Heart left ventricle (tissue), 16 donors: ENCODE measurements at regions of chr1 and their contacts with region 1.

Region 1: GRCh38 chr1:186985889-186986491 is 157.2 kb downstream of the PLA2G4A start:
- DNase-seq: no peak
- ATAC-seq: peak in 3 of 4 donors; percentile 62 to 73 (median 64)
- H3K4me3 ChIP-seq: no peak overlapping the region
- H3K27ac ChIP-seq: peak overlapping the region in 1 of 12 donors; percentile 79
- H3K4me1 ChIP-seq: peaks cover 0 to 3% (median 0%) of the 10 kb centered on the region in 12 donors
- H3K27me3 ChIP-seq: no peaks in the 10 kb centered on the region
- CTCF ChIP-seq: peak; percentile 49 to 79 (median 66)
- POLR2A ChIP-seq: no peak

Region 2: DNA sequence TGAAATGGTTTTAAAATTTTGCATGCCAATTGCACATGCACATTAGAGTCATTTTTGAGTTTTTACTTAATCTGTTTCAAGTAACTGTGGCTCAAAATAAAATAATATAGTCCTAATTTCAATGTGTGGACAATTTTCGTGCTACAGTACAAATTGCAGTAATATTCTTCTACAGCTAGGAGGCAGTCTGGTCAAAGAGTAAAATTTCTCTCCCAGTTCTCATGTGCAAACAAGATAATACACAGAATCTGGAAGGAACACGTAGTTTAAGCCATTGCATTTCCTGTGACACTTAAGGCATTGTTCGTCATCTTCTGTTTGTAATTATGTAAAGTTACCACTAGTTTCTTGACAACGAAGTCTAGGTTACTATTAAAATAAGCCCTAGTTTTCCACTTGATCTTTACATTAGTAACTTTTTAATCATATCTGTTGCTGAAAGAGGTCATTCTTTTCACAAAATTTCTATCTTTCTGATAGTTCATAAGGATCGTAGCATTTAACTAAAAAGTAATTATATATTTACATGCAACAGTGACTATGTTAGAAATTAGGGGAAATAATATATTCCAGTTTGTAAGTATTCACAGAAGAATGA is 581.4 kb before region 1 on chr1:
- intact Hi-C with region 1: loop called in 7 of 10 experiments (anchors 2 to 10 kb)
- DNase-seq: no peak
- ATAC-seq: peak in 1 of 4 donors; percentile 31
- H3K4me3 ChIP-seq: no peak overlapping the region
- H3K27ac ChIP-seq: no peak overlapping the region
- H3K4me1 ChIP-seq: peaks cover 0 to 7% (median 0%) of the 10 kb centered on the region in 12 donors
- H3K27me3 ChIP-seq: no peaks in the 10 kb centered on the region
- CTCF ChIP-seq: peak; percentile 45 to 76 (median 63)
- POLR2A ChIP-seq: no peak

Region 3: DNA sequence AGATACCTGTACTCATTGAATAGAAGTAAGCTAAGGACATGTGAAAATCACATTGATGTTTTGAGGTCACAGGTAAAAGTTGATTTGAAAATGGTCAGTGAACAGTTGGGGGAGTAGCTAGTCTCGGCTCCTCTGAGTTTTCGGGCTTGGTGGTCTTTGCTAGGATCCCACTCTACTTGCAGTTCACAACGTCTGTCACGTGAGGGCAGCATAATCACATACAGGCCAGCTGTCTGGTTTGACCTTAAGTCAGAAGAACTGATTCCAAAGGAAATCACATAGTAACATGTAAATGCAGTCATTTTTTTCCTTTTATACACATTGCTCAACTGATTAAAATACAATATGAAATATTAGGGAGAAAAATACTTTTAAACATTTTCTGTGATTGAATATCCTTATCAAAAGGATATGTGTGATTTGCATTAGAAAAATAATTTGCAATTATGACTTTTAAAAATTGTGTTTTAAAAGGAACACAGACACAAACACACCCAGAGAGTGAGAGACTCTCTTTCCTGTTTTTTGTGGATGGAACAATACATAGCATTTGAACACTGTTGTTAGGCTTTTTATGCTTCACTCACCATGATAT is 503.2 kb before region 1 on chr1:
- intact Hi-C with region 1: loop called (anchors 1 to 5 kb)
- DNase-seq: peak in 4 of 5 donors; percentile 16 to 37 (median 34)
- ATAC-seq: peak in 3 of 4 donors; percentile 50 to 66 (median 64)
- H3K4me3 ChIP-seq: no peak overlapping the region
- H3K27ac ChIP-seq: no peak overlapping the region
- H3K4me1 ChIP-seq: peaks cover 0 to 3% (median 0%) of the 10 kb centered on the region in 12 donors
- H3K27me3 ChIP-seq: no peaks in the 10 kb centered on the region
- CTCF ChIP-seq: peak; percentile 62 to 90 (median 81)
- POLR2A ChIP-seq: no peak

Region 4: DNA sequence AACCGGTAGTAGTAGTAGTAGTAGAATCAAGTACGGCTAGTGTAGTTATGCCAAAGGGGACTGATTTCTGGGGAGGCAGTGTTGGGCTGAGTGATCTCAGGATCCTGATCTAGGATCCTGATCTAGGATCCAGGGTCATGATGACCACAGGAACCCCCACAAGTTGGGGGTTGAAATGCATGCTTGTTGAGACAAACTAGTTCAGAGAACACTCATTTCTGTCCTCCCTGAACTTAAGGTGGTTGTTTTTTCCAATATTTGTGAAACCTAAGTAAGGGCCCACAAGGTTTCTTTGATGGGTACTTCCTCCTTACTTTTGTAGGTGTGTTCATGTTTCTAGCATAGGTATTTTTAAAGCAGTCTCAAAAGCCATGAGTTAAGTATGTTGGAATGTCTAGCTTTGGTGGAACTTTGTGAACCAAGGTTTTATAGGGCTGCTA is 491.1 kb before region 1 on chr1:
- intact Hi-C with region 1: loop called in 1 of 10 experiments (anchors 5 kb)
- DNase-seq: no peak
- ATAC-seq: no peak
- H3K4me3 ChIP-seq: no peak overlapping the region
- H3K27ac ChIP-seq: no peak overlapping the region
- H3K4me1 ChIP-seq: no peaks in the 10 kb centered on the region
- H3K27me3 ChIP-seq: no peaks in the 10 kb centered on the region
- CTCF ChIP-seq: no peak
- POLR2A ChIP-seq: no peak

Region 5: DNA sequence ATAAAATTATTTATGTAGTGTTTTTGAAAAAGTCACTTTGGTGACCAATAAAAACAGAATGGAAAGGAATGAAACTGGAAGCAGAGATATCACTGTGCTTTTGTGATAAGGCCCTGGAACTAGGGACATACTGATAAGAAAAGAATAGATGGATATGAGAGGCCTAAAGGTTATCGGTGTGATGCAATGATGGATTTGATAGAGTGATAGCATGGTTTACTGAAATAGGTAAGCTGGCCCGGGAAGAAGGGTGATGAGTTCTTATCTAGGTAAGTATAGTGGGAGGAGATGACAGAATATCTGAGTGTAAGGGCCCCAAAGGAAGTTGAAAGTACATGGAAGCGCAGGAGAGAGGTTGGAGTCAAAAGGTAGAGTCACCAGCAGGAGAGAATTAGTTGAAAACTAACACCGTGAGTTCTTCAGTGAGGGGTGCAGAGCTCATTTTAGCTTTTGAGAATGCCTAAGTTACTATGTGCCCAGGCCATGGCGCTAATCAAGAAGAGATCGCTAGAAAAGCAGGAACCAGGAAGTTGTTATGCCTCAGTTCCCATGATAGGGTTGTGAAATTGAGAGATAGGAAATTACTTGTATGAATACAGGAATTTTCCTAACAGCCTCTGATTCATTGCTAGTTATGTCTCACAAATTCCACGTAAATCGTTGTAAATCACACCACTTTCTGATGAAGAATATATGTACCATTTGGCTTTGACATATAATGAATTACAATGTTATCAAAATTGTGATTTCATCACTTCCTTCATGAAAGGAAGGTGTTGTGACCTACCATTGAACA is 41.9 kb before region 1 on chr1:
- intact Hi-C with region 1: no loop called
- DNase-seq: no peak
- ATAC-seq: no peak
- H3K4me3 ChIP-seq: no peak overlapping the region
- H3K27ac ChIP-seq: no peak overlapping the region
- H3K4me1 ChIP-seq: no peaks in the 10 kb centered on the region
- H3K27me3 ChIP-seq: no peaks in the 10 kb centered on the region
- CTCF ChIP-seq: no peak
- POLR2A ChIP-seq: no peak

Region 6: DNA sequence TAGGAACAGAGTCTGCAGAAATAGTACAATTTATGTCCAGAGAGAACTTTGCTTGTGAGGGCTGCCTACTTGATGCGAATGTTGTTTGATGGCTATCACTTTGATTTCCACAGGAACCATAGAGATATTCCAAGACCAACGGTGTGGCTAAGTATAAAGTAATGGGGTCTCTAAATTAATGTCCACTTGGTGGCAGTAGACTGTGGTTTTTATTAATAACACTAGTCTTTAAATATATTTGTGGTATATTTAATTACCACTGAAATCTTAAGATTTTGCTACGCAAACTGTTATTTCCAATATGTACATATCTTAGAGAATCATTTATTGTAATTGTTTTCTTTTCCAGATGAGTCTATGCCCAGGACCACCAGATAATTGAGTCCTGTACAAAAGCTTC is 490.7 kb after region 1 on chr1:
- intact Hi-C with region 1: no loop called
- DNase-seq: no peak
- ATAC-seq: no peak
- H3K4me3 ChIP-seq: no peak overlapping the region
- H3K27ac ChIP-seq: no peak overlapping the region
- H3K4me1 ChIP-seq: no peaks in the 10 kb centered on the region
- H3K27me3 ChIP-seq: no peaks in the 10 kb centered on the region
- CTCF ChIP-seq: peak in 9 of 12 donors; percentile 13 to 44 (median 34)
- POLR2A ChIP-seq: no peak